ENCODE measurements at regions of chr6 and their contacts with region 1.

Region 1: GRCh38 chr6:157034436-157035230 is 257.5 kb downstream of the ARID1B start:
- DNase-seq: no peak
- H3K4me3 Mint-ChIP-seq: peak overlapping the region; percentile 72
- H3K27ac Mint-ChIP-seq: no peak overlapping the region
- H3K4me1 Mint-ChIP-seq: peaks cover 14% of the 10 kb centered on the region
- H3K27me3 Mint-ChIP-seq: no peaks in the 10 kb centered on the region

Region 2: DNA sequence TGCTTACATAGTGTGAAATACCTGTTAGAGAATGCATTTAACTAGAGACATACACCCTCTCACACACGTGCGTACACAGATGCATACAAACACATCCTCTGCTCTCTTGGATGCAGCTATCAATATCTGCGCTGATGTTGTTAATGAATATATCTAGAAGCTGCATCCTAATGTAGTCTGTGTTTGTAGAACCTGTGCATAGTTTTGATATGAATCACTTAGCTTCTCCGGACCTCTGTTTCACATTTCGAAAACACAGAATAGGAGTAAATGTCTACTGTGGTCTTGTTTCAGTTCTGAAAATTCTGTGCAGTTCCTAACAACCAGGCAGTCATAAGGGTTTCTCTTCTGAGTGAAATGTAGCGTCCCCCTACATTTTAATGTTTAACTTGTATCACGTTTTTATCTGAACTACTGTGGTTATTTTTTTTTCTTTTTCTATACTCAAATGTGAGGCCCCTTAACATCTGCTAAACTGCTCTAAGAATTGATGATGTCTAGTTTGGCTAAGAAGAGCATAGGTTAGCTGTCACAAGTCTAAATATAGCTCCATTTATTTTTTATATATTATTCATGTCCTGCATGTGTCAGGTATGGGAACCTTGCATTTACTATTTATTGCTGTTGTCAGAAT is 34.2 kb after region 1 on chr6:
- intact Hi-C with region 1: loop called (anchors 5 kb)
- DNase-seq: peak; percentile 64
- H3K4me3 Mint-ChIP-seq: peak overlapping the region; percentile 53
- H3K27ac Mint-ChIP-seq: peak overlapping the region; percentile 77
- H3K4me1 Mint-ChIP-seq: peaks cover 31% of the 10 kb centered on the region
- H3K27me3 Mint-ChIP-seq: no peaks in the 10 kb centered on the region

Region 3: DNA sequence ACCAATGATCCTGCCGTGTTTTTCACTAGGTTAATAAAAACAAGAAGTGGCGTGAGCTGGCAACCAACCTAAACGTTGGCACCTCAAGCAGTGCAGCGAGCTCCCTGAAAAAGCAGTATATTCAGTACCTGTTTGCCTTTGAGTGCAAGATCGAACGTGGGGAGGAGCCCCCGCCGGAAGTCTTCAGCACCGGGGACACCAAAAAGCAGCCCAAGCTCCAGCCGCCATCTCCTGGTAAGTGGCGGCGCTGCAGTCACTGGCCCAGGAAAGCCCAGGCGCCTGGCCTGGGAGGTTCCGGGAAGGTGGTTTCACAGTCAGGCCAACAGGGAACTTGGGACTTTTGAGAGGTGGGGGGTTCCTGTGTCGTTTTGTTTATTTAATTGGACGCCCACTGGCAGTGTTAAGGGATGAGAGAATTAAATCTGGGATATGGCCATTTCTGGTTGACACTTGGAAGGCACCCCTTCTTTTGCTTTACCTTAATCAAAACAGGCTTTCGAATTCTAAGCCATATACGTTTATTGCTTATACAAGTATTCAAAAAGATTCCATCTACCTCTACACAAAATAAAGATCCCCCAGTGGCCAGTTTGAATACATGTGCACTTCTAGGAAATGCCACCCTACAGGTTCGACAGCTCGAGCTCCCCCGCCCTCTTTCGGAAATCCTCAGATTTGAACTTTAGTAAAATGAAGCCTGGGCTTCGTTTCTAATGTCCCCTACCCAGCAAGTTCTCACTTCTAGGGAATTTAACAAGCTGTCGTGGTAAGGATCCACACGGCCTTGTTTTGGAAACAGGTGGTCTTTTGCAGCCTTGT is 149.8 kb after region 1 on chr6:
- intact Hi-C with region 1: loop called (anchors 1 kb)
- DNase-seq: peak; percentile 88
- H3K4me3 Mint-ChIP-seq: no peak overlapping the region
- H3K27ac Mint-ChIP-seq: peak overlapping the region; percentile 25
- H3K4me1 Mint-ChIP-seq: peaks cover 6% of the 10 kb centered on the region
- H3K27me3 Mint-ChIP-seq: no peaks in the 10 kb centered on the region